Sigmoid colon (tissue), 7 donors: ENCODE measurements at regions of chr13 and their contacts with region 1.

Region 1: GRCh38 chr13:100674848-100675660 is 459 bp upstream of the TMTC4 start:
- DNase-seq: peak; percentile 100
- H3K4me3 ChIP-seq: peak overlapping the region; percentile 55 to 96 (median 83)
- H3K27ac ChIP-seq: peak overlapping the region; percentile 87 to 95 (median 92)
- H3K4me1 ChIP-seq: peaks cover 0 to 21% (median 16%) of the 10 kb centered on the region in 4 donors
- H3K27me3 ChIP-seq: no peaks in the 10 kb centered on the region
- CTCF ChIP-seq: no peak
- EP300 ChIP-seq: no peak
- POLR2A ChIP-seq: peak; percentile 29 to 41

Region 2: DNA sequence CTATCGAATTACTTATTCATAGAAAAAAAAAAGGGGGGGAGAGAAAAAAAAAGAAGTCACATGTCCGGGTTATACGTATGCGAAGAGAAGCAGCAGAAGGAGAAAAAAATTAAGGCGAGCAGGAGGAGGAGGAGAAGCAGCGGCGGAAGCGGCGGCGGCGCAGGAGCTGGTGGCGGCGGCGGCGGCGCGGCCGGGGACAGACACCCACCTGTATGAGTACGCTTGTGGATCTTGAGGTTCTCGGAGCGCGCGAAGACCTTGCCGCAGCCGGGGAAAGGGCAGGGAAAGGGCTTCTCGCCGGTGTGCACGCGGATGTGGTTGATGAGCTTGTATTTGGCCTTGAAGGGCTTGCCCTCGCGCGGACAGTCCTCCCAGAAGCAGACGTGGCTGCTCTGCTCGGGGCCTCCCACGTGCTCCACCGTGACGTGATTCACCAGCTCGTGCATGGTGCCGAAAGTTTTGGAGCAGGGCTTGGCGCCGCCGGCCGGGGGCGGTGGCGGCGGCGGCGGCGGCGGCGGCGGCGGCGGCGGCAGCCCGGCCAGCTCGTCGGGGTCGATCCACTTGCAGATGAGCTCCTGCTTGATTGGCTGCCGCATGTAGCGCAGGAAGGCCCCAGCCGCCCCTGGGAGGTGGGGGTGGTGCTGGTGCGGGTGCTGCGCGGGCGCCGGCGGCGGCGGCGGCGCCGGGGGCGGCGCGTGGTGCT is 705.0 kb before region 1 on chr13:
- intact Hi-C with region 1: loop called (anchors 10 kb)
- DNase-seq: no peak
- H3K4me3 ChIP-seq: peak overlapping the region in 3 of 4 donors; percentile 4 to 25 (median 22)
- H3K27ac ChIP-seq: no peak overlapping the region
- H3K4me1 ChIP-seq: peaks cover 0 to 43% (median 38%) of the 10 kb centered on the region in 4 donors
- H3K27me3 ChIP-seq: peaks cover 81 to 99% (median 97%) of the 10 kb centered on the region in 3 donors
- CTCF ChIP-seq: no peak
- EP300 ChIP-seq: no peak
- POLR2A ChIP-seq: no peak